ENCODE measurements at regions of chr19 and their contacts with region 1.

Region 1: DNA sequence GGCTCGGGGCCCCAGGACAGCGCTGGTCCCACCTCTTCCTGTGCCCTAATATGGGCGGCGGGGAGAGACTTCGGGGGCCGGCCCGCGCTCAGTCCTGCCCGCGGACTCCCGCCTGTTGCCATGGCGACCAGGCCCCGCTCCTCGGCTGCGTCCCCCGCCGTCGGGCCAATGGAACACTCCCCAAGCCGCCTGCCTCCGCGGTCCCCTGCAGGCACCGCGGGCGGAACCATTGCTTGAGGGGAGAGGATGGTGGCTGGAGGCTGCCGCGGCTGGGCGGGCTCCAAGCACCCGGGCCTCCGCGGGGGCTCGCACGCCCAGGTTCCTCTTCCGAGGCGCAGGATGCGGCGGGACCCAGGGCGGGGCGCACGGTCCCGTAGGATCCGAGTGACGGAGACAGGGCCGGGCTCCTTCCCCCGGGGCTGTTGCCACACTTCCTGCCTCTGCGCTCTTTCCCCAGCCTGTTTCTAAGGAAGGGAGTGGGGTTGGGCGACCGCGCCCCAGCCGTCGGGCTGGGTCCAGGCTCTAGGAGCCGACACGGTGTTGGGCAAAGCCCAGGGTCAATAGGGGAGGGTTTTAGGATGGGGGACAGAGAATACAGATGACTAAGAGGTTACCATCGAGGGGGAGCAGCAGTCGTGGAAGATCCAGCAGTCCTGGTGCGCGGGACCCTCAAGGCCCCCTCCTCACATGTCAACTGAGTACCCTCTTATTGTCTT is 1.2 kb upstream of the JUNB start:
- DNase-seq: peak; percentile 94 to 95
- ATAC-seq: peak; percentile 35 to 56 (median 41)
- H3K4me3 ChIP-seq: peak overlapping the region; percentile 95
- H3K4me3 Mint-ChIP-seq: peak overlapping the region; percentile 96
- H3K27ac ChIP-seq: peak overlapping the region; percentile 93
- H3K27ac Mint-ChIP-seq: peak overlapping the region; percentile 97 to 99
- H3K4me1 ChIP-seq: peaks cover 57% of the 10 kb centered on the region
- H3K4me1 Mint-ChIP-seq: peaks cover 28 to 38% of the 10 kb centered on the region in 2 donors
- H3K27me3 ChIP-seq: no peaks in the 10 kb centered on the region
- H3K27me3 Mint-ChIP-seq: no peaks in the 10 kb centered on the region
- CTCF ChIP-seq: no peak

Region 2: GRCh38 chr19:12666265-12667048 is 123.6 kb before region 1 on chr19 and contains the starts of genes MAN2B1 and WDR83:
- intact Hi-C with region 1: loop called (anchors 10 kb)
- DNase-seq: peak; percentile 77 to 91
- ATAC-seq: peak; percentile 78 to 87 (median 82)
- H3K4me3 ChIP-seq: peak within 1 kb of the TSS; percentile 94
- H3K4me3 Mint-ChIP-seq: peak within 1 kb of the TSS; percentile 96
- H3K27ac ChIP-seq: peak within 1 kb of the TSS; percentile 90
- H3K27ac Mint-ChIP-seq: peak within 1 kb of the TSS; percentile 98
- H3K4me1 ChIP-seq: peaks cover 59% of the 10 kb centered on the region
- H3K4me1 Mint-ChIP-seq: peaks cover 41 to 52% of the 10 kb centered on the region in 2 donors
- H3K27me3 ChIP-seq: no peaks in the 10 kb centered on the region
- H3K27me3 Mint-ChIP-seq: no peaks in the 10 kb centered on the region
- CTCF ChIP-seq: no peak
- total RNA-seq, gene MAN2B1: 107 to 118 (median 112) TPM
- total RNA-seq, gene WDR83: 17.0 to 25.8 (median 25.1) TPM

Region 3: DNA sequence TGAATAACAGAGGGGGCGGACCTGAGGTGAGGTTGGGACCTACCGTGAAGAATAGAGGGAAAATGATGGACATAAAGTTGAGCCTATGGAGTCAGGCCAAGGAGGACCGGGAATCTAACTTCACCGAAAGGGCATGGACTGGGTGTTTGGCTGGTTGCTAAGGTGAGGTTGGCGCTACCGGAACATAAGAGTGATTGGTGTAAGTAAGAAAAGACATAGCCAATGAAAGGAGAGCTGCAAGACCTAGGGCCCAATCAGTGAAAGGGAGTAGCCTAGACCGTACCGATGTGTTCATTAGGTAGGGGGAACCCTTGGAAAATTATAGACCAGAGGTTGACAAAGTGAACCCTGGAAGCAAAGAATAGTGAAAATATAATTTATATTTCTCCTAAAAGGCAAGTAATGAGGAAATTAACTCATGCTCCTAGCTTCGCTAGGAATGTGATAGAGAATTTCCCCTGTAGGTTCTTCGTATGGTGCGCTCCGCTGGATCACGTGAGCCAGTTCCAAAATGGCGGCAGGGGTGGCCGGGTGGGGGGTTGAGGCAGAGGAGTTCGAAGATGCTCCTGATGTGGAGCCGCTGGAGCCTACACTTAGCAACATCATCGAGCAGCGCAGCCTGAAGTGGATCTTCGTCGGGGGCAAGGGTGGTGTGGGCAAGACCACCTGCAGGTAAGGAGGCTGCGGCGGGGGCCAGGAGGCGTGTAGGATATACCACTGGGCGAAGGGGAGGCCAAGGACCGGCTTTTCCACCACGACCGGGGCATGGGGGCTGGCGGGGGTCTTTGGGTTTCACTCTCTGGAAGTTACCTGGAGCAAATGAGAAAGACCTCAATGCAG is 52.8 kb before region 1 on chr19 and contains the start of gene GET3:
- intact Hi-C with region 1: loop called (anchors 2 kb)
- DNase-seq: peak; percentile 73 to 92
- ATAC-seq: peak; percentile 72 to 85 (median 76)
- H3K4me3 ChIP-seq: peak within 1 kb of the TSS; percentile 58
- H3K4me3 Mint-ChIP-seq: peak within 1 kb of the TSS; percentile 93
- H3K27ac ChIP-seq: peak within 1 kb of the TSS; percentile 83
- H3K27ac Mint-ChIP-seq: peak within 1 kb of the TSS; percentile 90 to 92
- H3K4me1 ChIP-seq: peaks cover 43% of the 10 kb centered on the region
- H3K4me1 Mint-ChIP-seq: peaks cover 34 to 45% of the 10 kb centered on the region in 2 donors
- H3K27me3 ChIP-seq: no peaks in the 10 kb centered on the region
- H3K27me3 Mint-ChIP-seq: no peaks in the 10 kb centered on the region
- CTCF ChIP-seq: no peak
- total RNA-seq, gene GET3: 42.2 to 51.3 (median 44.2) TPM

Region 4: GRCh38 chr19:12757544-12758274 is 32.4 kb before region 1 on chr19:
- intact Hi-C with region 1: no loop called
- DNase-seq: peak; percentile 70 to 77
- ATAC-seq: peak; percentile 80 to 83 (median 82)
- H3K4me3 ChIP-seq: no peak overlapping the region
- H3K4me3 Mint-ChIP-seq: no peak overlapping the region
- H3K27ac ChIP-seq: no peak overlapping the region
- H3K27ac Mint-ChIP-seq: no peak overlapping the region
- H3K4me1 ChIP-seq: peaks cover 9% of the 10 kb centered on the region
- H3K4me1 Mint-ChIP-seq: peaks cover 0 to 5% of the 10 kb centered on the region in 2 donors
- H3K27me3 ChIP-seq: peaks cover 2% of the 10 kb centered on the region
- H3K27me3 Mint-ChIP-seq: peaks cover 0 to 9% of the 10 kb centered on the region in 2 donors
- CTCF ChIP-seq: peak; percentile 83

Region 5: DNA sequence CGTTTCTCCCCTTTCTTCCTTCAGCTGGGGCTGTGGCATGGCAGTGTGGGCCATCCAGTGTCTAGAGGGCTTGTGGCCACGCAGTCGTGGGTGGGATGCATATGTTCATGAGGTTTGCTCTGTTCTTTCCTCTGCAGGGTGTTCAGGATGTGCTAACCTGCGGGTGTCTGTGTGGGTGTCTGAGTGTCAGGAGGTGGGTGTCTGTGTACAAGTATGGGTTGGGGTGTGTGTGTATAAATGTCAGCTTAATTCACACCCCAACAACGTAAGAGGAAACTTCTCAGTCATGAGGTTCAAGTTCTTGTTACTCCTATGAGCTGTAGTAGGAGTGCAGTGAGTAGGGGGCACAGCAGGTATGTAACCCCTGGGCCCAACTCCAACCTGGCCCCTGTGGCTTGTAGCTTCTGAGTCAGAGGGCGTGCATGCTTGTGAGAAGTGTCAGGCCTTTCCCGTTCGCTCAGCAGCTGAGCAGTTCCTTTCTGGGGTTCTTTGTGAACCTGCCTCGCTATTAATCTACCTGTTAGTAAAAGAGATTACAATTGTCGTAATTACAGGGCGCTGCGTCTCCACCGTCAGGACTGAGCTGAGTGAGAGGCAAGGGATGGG is 254.3 kb after region 1 on chr19:
- intact Hi-C with region 1: loop called (anchors 10 kb)
- DNase-seq: peak; percentile 79 to 83
- ATAC-seq: peak; percentile 83 to 93 (median 92)
- H3K4me3 ChIP-seq: no peak overlapping the region
- H3K4me3 Mint-ChIP-seq: peak overlapping the region; percentile 82
- H3K27ac ChIP-seq: peak overlapping the region; percentile 88
- H3K27ac Mint-ChIP-seq: peak overlapping the region; percentile 76 to 95
- H3K4me1 ChIP-seq: peaks cover 44% of the 10 kb centered on the region
- H3K4me1 Mint-ChIP-seq: peaks cover 33 to 42% of the 10 kb centered on the region in 2 donors
- H3K27me3 ChIP-seq: no peaks in the 10 kb centered on the region
- H3K27me3 Mint-ChIP-seq: peaks cover 0 to 11% of the 10 kb centered on the region in 2 donors
- CTCF ChIP-seq: no peak

Region 6: DNA sequence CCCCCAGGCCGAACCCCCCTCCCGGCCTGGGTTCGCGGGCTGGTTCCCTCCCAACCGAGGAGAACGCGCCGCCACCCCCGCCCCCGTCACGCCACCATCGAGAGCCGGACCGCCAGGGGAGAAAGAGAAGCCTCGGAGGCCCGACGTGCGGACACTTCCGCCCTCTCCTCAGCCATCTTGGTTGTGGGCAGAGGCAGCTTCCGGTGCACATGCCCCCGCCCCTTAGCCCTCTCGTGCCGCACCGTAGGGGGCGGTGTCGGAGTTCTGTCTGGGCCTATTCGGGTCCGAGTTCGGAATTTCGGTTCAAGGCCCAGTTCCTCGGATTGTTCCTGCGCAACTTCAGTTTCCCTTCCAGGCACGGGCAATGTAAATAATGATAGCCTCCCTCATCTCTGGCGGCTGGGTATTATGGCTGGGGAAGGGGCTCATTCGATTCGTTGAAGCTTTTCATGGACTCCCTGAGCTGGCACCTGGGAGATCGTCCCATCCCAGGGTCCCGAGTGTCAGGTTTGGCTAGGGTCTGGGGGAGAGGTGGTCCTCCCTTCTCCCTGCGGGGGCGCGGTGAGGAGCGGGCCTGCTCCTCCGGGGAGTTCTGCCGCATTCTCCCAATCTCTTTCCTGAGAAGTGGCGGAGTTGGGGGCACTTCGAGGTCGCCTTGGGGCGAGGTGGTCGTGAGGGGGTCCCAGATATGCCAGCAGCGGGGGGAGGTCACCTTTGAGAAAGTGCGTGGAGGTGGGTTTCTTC is 360.3 kb after region 1 on chr19 and contains the starts of genes IER2 and STX10:
- intact Hi-C with region 1: loop called (anchors 10 kb)
- DNase-seq: peak; percentile 88 to 97
- ATAC-seq: peak; percentile 50 to 74 (median 53)
- H3K4me3 ChIP-seq: peak within 1 kb of the TSS; percentile 100
- H3K4me3 Mint-ChIP-seq: peak within 1 kb of the TSS; percentile 99
- H3K27ac ChIP-seq: peak within 1 kb of the TSS; percentile 90
- H3K27ac Mint-ChIP-seq: peak within 1 kb of the TSS; percentile 99
- H3K4me1 ChIP-seq: peaks cover 36% of the 10 kb centered on the region
- H3K4me1 Mint-ChIP-seq: peaks cover 52 to 73% of the 10 kb centered on the region in 2 donors
- H3K27me3 ChIP-seq: no peaks in the 10 kb centered on the region
- H3K27me3 Mint-ChIP-seq: peaks cover 0 to 3% of the 10 kb centered on the region in 2 donors
- CTCF ChIP-seq: peak; percentile 41
- total RNA-seq, gene IER2: 668 to 1,112 (median 949) TPM
- total RNA-seq, gene STX10: 39.2 to 46.9 (median 42.0) TPM

Measured in natural killer cell (primary cell).